PC-3 (cell line): ENCODE measurements at regions of chr1 and their contacts with region 1.

Region 1: DNA sequence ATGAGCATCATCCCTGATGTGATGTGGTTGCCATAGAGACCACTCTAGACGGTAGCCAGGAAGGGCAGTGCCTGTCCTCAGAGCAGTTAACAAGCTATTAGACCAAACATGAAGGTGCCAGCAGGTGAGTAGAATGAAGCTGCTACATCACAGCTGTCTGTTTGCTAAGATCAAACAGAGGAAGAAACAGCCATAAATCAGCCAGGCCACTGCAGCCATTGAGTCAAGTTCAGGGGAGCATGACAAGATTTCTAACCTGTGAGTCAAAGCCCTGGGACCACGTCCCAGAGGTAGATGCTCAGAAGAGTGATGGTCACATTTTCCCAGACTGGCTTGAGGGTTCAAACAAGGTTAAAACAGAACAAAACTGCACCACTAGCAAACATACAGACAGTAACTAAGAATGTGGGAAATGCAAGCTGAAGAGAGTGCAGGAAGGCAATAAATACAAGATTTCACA is 450.6 kb upstream of the DAB1 start:
- DNase-seq: no peak
- ATAC-seq: no peak
- H3K4me3 ChIP-seq: no peak overlapping the region
- H3K27ac ChIP-seq: no peak overlapping the region
- H3K4me1 ChIP-seq: no peaks in the 10 kb centered on the region
- H3K27me3 ChIP-seq: no peaks in the 10 kb centered on the region
- CTCF ChIP-seq: no peak

Region 2: GRCh38 chr1:57782357-57782756 is 92.1 kb before region 1 on chr1:
- CTCF ChIA-PET with region 1: no interaction called
- POLR2A ChIA-PET with region 1: interaction called, 17 read pairs
- intact Hi-C with region 1: no loop called
- DNase-seq: no peak
- ATAC-seq: no peak
- H3K4me3 ChIP-seq: no peak overlapping the region
- H3K27ac ChIP-seq: no peak overlapping the region
- H3K4me1 ChIP-seq: no peaks in the 10 kb centered on the region
- H3K27me3 ChIP-seq: no peaks in the 10 kb centered on the region
- CTCF ChIP-seq: no peak

Region 3: GRCh38 chr1:58231204-58231603 is 356.8 kb after region 1 on chr1:
- CTCF ChIA-PET with region 1: no interaction called
- POLR2A ChIA-PET with region 1: no interaction called
- intact Hi-C with region 1: no loop called
- DNase-seq: no peak
- ATAC-seq: no peak
- H3K4me3 ChIP-seq: no peak overlapping the region
- H3K27ac ChIP-seq: no peak overlapping the region
- H3K4me1 ChIP-seq: no peaks in the 10 kb centered on the region
- H3K27me3 ChIP-seq: peaks cover 10% of the 10 kb centered on the region; the same call in 1 of the 2 replicates
- CTCF ChIP-seq: no peak